Body of pancreas (tissue), 4 donors: ENCODE measurements at regions of chr12 and their contacts with region 1.

Region 1: DNA sequence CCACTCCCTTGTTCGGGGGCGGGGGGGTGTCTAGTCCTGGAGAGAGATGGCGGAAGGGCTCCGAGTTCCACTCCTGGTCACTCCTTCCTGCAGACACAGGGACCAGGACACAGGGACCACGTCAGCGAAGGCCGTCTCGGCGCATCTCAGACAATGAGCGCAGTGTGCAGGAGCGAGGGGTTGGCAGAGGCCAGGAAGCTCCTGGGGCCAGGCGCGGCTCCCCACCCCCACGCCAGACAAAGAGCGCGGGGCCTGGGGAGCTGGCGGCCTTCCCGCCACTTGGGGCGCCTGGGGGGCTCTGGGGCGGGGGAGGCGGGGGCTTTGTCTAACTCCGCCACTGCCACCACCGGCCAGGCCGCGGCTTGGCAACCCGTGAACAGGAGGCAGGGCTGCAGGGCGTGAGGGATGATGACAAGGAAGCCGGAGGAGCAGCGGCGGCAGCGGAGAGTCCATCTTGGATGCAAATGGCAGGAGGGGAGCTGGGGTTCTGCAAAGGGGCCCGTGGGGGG is 2.2 kb downstream of the CDK2AP1 start:
- DNase-seq: peak; percentile 56 to 73 (median 68)
- ATAC-seq: peak; percentile 47
- H3K4me3 ChIP-seq: peak overlapping the region in 1 of 2 donors; percentile 23
- H3K27ac ChIP-seq: peak overlapping the region; percentile 26 to 88 (median 62)
- H3K4me1 ChIP-seq: peaks cover 36% of the 10 kb centered on the region
- H3K27me3 ChIP-seq: no peaks in the 10 kb centered on the region
- CTCF ChIP-seq: no peak
- POLR2A ChIP-seq: peak in 1 of 3 donors; percentile 8

Region 2: DNA sequence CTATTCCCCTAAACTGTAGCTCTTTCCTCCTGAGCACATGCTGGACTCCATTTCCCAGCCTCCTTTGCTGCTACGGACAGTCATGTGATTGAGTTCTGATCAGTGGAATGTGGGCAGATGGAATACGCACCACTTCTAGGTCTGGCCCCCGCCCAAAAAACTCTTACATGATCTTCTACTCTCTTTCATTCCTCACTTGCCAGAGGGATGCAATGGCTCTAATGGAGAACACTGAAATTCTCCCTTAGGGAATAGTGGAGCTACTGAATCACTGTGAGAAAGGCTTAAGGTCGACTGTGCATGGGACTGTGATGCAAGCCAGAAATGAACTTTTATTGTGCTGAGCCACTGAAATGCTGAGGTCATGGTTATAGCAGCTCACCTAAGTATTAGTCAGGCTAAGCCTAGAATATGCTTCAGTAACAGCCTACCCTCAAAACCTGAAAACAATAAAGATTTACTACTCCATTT is 301.9 kb after region 1 on chr12:
- intact Hi-C with region 1: loop called (anchors 10 kb)
- DNase-seq: peak; percentile 27 to 58 (median 46)
- ATAC-seq: peak; percentile 42
- H3K4me3 ChIP-seq: no peak overlapping the region
- H3K27ac ChIP-seq: no peak overlapping the region
- H3K4me1 ChIP-seq: no peaks in the 10 kb centered on the region
- H3K27me3 ChIP-seq: no peaks in the 10 kb centered on the region
- CTCF ChIP-seq: no peak
- POLR2A ChIP-seq: no peak